ENCODE measurements at regions of chrX and their contacts with region 1.

Region 1: GRCh38 chrX:9995855-9996339 is 28.7 kb downstream of the CLDN34 start:
- DNase-seq: peak; percentile 82
- ATAC-seq: peak; percentile 45
- H3K4me3 Mint-ChIP-seq: no peak overlapping the region
- H3K27ac Mint-ChIP-seq: no peak overlapping the region
- H3K4me1 Mint-ChIP-seq: peaks cover 21% of the 10 kb centered on the region
- H3K27me3 Mint-ChIP-seq: no peaks in the 10 kb centered on the region

Region 2: GRCh38 chrX:8815464-8816065 is 1180.3 kb before region 1 on chrX:
- CTCF ChIA-PET with region 1: no interaction called
- POLR2A ChIA-PET with region 1: no interaction called
- intact Hi-C with region 1: loop called in 1 of 2 experiments (anchors 5 kb)
- DNase-seq: peak; percentile 3
- ATAC-seq: no peak
- H3K4me3 Mint-ChIP-seq: no peak overlapping the region
- H3K27ac Mint-ChIP-seq: no peak overlapping the region
- H3K4me1 Mint-ChIP-seq: no peaks in the 10 kb centered on the region
- H3K27me3 Mint-ChIP-seq: no peaks in the 10 kb centered on the region

Region 3: DNA sequence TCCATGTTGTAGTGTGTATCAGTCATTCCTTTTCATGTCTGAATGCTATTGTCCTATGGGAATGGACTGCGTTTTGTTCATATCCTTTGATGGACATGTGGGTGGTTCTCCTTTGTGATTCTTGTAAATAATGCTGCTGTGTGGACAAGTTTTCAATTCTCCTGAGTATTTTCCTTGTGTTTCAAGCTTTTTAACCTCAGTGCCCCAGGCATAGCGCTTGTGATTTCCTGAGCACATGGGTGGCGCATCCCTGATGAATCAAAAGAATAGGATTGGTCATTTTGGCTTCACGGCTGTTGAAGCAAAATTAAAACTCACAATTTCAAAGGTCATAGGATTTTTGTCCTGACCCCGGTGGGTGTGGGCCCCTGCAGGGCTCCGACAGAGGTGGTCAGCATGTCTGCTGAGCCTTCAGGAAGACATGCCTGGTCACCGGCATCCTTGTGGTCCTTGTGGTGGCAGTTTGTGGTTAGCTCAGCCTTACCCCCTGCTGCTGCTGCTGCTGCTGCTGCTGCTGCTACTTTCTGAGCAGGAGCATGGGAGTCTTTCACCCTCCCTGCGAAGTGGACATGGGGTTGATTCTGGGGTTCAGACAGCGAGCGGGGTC is 179.7 kb before region 1 on chrX:
- CTCF ChIA-PET with region 1: no interaction called
- POLR2A ChIA-PET with region 1: no interaction called
- intact Hi-C with region 1: no loop called
- DNase-seq: no peak
- ATAC-seq: no peak
- H3K4me3 Mint-ChIP-seq: no peak overlapping the region
- H3K27ac Mint-ChIP-seq: no peak overlapping the region
- H3K4me1 Mint-ChIP-seq: no peaks in the 10 kb centered on the region
- H3K27me3 Mint-ChIP-seq: peaks cover 13% of the 10 kb centered on the region

Region 4: GRCh38 chrX:9885150-9885549 is 110.7 kb before region 1 on chrX:
- CTCF ChIA-PET with region 1: interaction called, 3 read pairs
- POLR2A ChIA-PET with region 1: no interaction called
- intact Hi-C with region 1: loop called (anchors 1 to 2 kb)
- DNase-seq: peak; percentile 74
- ATAC-seq: peak; percentile 83
- H3K4me3 Mint-ChIP-seq: no peak overlapping the region
- H3K27ac Mint-ChIP-seq: no peak overlapping the region
- H3K4me1 Mint-ChIP-seq: peaks cover 2% of the 10 kb centered on the region
- H3K27me3 Mint-ChIP-seq: no peaks in the 10 kb centered on the region

Region 5: DNA sequence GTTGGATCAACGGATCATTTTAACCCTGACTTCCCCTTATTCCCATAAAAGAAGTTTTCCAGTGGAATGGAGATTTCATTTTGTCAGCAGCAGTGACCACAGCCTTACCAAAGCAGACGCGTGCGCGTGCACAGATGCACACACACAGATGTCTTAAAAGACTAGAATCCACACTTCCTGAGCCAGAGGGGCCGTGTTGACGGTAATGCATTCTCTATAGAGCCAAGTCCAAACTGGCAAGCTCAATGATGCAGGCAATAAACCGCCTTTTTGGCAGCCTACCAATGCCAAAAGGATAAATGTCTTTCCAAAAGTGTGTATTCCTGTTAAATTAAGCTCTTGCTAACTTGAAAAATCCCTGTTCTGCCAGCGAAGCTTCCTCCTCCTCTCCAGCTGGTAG is 47.5 kb before region 1 on chrX:
- CTCF ChIA-PET with region 1: no interaction called
- POLR2A ChIA-PET with region 1: no interaction called
- intact Hi-C with region 1: no loop called
- DNase-seq: no peak
- ATAC-seq: no peak
- H3K4me3 Mint-ChIP-seq: no peak overlapping the region
- H3K27ac Mint-ChIP-seq: no peak overlapping the region
- H3K4me1 Mint-ChIP-seq: peaks cover under 1% of the 10 kb centered on the region
- H3K27me3 Mint-ChIP-seq: peaks cover 21% of the 10 kb centered on the region

Region 6: GRCh38 chrX:10039821-10040793 is 44.2 kb after region 1 on chrX:
- CTCF ChIA-PET with region 1: no interaction called
- POLR2A ChIA-PET with region 1: no interaction called
- intact Hi-C with region 1: no loop called
- DNase-seq: peak; percentile 3
- ATAC-seq: peak; percentile 63
- H3K4me3 Mint-ChIP-seq: no peak overlapping the region
- H3K27ac Mint-ChIP-seq: no peak overlapping the region
- H3K4me1 Mint-ChIP-seq: peaks cover 7% of the 10 kb centered on the region
- H3K27me3 Mint-ChIP-seq: no peaks in the 10 kb centered on the region

Region 7: GRCh38 chrX:10098270-10098713 is 102.4 kb after region 1 on chrX:
- CTCF ChIA-PET with region 1: interaction called, 26 read pairs
- POLR2A ChIA-PET with region 1: interaction called, 5 read pairs
- intact Hi-C with region 1: loop called (anchors 1 kb)
- DNase-seq: peak; percentile 81
- ATAC-seq: peak; percentile 71
- H3K4me3 Mint-ChIP-seq: peak overlapping the region; percentile 67
- H3K27ac Mint-ChIP-seq: peak overlapping the region; percentile 94
- H3K4me1 Mint-ChIP-seq: peaks cover 49% of the 10 kb centered on the region
- H3K27me3 Mint-ChIP-seq: no peaks in the 10 kb centered on the region

Region 8: GRCh38 chrX:10119399-10119990 is 123.6 kb after region 1 on chrX:
- CTCF ChIA-PET with region 1: interaction called, 100 read pairs
- POLR2A ChIA-PET with region 1: no interaction called
- intact Hi-C with region 1: loop called (anchors 1 kb)
- DNase-seq: peak; percentile 76
- ATAC-seq: peak; percentile 77
- H3K4me3 Mint-ChIP-seq: no peak overlapping the region
- H3K27ac Mint-ChIP-seq: peak overlapping the region; percentile 30
- H3K4me1 Mint-ChIP-seq: peaks cover 11% of the 10 kb centered on the region
- H3K27me3 Mint-ChIP-seq: no peaks in the 10 kb centered on the region

Region 9: DNA sequence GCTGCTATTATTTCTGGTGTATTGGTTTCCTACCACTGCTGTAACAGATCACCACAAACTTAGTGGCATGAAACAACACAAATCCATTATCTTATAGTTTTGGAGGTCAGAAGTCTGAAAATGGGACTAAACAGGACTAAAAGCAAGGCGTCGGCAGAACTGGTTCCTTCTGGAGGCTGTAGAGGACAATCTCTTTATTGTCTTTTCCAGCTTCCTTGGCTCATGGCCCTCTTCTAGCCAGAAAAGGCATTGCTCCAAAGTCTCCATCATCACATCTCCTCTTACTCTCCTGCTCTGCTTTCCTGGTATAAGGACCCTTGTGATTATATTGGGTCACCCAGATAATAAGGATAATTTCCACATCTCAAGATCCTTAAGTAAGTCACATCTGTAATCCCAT is 282.8 kb after region 1 on chrX:
- CTCF ChIA-PET with region 1: no interaction called
- POLR2A ChIA-PET with region 1: no interaction called
- intact Hi-C with region 1: no loop called
- DNase-seq: no peak
- ATAC-seq: no peak
- H3K4me3 Mint-ChIP-seq: no peak overlapping the region
- H3K27ac Mint-ChIP-seq: no peak overlapping the region
- H3K4me1 Mint-ChIP-seq: no peaks in the 10 kb centered on the region
- H3K27me3 Mint-ChIP-seq: no peaks in the 10 kb centered on the region